Pancreas (tissue), 10 donors: ENCODE measurements at regions of chr3 and their contacts with region 1.

Region 1: GRCh38 chr3:20185701-20186598 is at the start of gene SGO1:
- DNase-seq: peak; percentile 98 to 99 (median 99)
- ATAC-seq: peak; percentile 97 to 99 (median 98)
- H3K4me3 ChIP-seq: peak within 1 kb of the TSS; percentile 39 to 78 (median 54)
- H3K27ac ChIP-seq: peak within 1 kb of the TSS; percentile 77 to 94 (median 90)
- H3K4me1 ChIP-seq: peaks cover 5 to 17% (median 5%) of the 10 kb centered on the region in 3 donors
- H3K27me3 ChIP-seq: no peaks in the 10 kb centered on the region
- CTCF ChIP-seq: no peak
- total RNA-seq, gene SGO1: 0.14 to 0.69 (median 0.29) TPM in 4 of 6 donors, not detected in the others

Region 2: GRCh38 chr3:20039766-20040475 is 146.0 kb before region 1 on chr3 and contains the start of gene KAT2B:
- intact Hi-C with region 1: loop called in 1 of 3 experiments (anchors 10 kb)
- DNase-seq: peak; percentile 82 to 91 (median 86)
- ATAC-seq: peak; percentile 80 to 85 (median 81)
- H3K4me3 ChIP-seq: peak within 1 kb of the TSS; percentile 49 to 84 (median 70)
- H3K27ac ChIP-seq: peak within 1 kb of the TSS; percentile 89 to 98 (median 92)
- H3K4me1 ChIP-seq: peaks cover 0 to 34% (median 21%) of the 10 kb centered on the region in 3 donors
- H3K27me3 ChIP-seq: no peaks in the 10 kb centered on the region
- CTCF ChIP-seq: peak; percentile 40 to 65 (median 61)
- total RNA-seq, gene KAT2B: 13.1 to 21.6 (median 16.0) TPM